Colonic mucosa (tissue), 4 donors: ENCODE measurements at regions of chr15 and their contacts with region 1.

Region 1: DNA sequence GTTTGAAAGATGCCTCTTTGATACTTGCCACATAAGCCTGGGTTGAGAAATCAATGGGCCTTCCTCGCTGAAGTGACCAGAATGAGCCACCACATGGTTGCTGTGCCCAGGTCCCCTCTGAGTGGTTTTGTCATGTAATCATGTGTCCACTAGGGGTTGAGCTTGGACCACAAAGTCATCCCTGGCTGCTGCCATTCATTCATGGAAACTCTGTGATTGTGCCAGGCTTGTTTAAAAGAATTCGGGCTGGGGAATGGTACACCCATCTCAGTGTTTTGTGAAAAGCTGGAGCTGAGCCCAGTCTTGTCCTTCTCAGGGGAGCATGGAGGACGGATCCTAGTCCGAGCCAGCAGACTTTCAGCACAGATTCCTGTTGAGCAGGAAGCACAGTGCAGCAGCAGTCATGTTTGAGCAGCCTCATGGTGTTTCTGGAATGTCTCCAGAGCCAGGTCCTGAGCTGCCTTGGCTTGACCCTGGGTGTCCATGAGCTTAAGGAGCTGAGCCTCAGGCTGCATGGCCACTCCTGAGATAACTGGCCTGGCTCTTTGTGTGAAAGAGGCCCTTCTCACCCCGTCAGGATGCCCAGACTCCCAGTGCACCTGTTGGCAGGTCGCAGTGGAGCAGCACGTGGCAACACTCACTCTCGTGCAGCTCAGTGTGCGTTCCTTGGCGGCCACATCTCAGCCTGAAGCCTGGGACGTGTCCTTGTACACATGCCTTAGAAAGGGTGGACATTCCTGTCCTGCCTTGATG is 260.3 kb upstream of the TPM1 start:
- DNase-seq: peak; percentile 59
- H3K4me3 ChIP-seq: no peak overlapping the region
- H3K27ac ChIP-seq: no peak overlapping the region
- H3K4me1 ChIP-seq: no peaks in the 10 kb centered on the region
- H3K27me3 ChIP-seq: no peaks in the 10 kb centered on the region
- CTCF ChIP-seq: peak; percentile 63

Region 2: GRCh38 chr15:62847900-62848489 is 65.8 kb after region 1 on chr15:
- intact Hi-C with region 1: loop called (anchors 5 kb)
- DNase-seq: peak; percentile 84
- H3K4me3 ChIP-seq: no peak overlapping the region
- H3K27ac ChIP-seq: no peak overlapping the region
- H3K4me1 ChIP-seq: no peaks in the 10 kb centered on the region
- H3K27me3 ChIP-seq: no peaks in the 10 kb centered on the region
- CTCF ChIP-seq: peak; percentile 73

Region 3: GRCh38 chr15:63030101-63030551 is 247.9 kb after region 1 on chr15:
- intact Hi-C with region 1: loop called (anchors 10 kb)
- DNase-seq: peak; percentile 46
- H3K4me3 ChIP-seq: no peak overlapping the region
- H3K27ac ChIP-seq: no peak overlapping the region
- H3K4me1 ChIP-seq: peaks cover under 1% of the 10 kb centered on the region
- H3K27me3 ChIP-seq: no peaks in the 10 kb centered on the region
- CTCF ChIP-seq: no peak

Region 4: GRCh38 chr15:63093486-63094205 is 311.4 kb after region 1 on chr15:
- intact Hi-C with region 1: loop called (anchors 5 kb)
- DNase-seq: peak; percentile 92
- H3K4me3 ChIP-seq: no peak overlapping the region
- H3K27ac ChIP-seq: no peak overlapping the region
- H3K4me1 ChIP-seq: no peaks in the 10 kb centered on the region
- H3K27me3 ChIP-seq: no peaks in the 10 kb centered on the region
- CTCF ChIP-seq: peak; percentile 80